ENCODE measurements at regions of chr5 and their contacts with region 1.

Region 1: DNA sequence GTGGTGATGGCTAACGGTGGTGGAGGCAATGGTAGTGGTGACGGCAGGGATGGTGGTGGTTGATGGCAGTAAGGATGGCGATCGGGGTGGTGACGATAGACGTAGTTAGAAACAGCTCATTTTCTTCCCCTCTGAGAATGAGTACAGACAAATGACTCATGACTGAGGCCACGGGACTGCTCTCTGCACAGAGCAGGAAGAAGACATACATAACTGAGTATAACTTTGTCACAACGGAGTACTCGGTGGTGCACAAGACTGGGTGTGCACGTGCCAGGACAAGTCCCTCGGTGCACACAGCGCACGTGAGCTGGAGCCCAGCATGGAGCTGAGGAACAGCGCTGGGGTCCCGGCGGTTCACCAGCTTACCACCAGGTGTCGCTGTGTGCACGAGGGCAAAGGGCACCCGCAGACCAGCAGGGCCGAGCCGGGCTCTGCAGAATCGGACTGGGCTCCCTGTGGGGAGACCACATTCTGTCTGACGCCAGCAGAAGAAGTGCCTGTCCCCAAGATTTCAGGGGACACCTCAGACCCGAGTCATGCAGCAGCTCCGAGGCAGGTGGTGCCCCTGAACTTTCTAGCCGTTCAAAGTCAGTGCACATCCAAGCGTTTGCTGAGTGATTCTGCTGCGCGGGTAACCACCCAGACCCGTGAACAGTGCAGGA is 188.6 kb downstream of the FSTL4 start:
- DNase-seq: peak; percentile 87
- H3K4me3 ChIP-seq: no peak overlapping the region
- H3K27ac ChIP-seq: no peak overlapping the region
- H3K4me1 ChIP-seq: no peaks in the 10 kb centered on the region; a peak in 1 of 4 replicates
- H3K27me3 ChIP-seq: no peaks in the 10 kb centered on the region; the same call in 1 of the 2 replicates
- CTCF ChIP-seq: peak; percentile 82
- EP300 ChIP-seq: no peak
- RAD21 ChIP-seq: peak; percentile 85

Region 2: DNA sequence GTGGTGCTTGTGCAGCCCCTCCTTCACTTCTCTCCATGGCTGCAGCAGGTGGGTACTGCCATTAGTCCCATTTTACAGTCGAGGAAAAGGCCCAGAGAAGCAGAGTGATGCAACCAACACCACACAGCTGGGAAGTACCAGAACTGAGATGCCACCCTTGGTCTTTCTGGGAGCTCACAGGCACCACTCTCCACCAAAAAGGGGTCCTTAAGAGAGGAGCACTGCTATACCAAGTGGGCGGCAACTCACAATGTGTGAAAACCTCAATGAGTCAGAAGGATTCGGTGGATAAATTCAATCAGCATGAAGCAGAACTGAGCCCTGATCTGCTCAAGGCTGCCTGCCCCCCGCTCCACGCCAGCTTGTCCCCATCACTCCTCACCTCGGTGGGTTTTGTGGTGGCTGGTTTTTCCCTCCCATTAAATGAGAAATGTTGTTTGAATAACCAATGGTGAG is 25.1 kb before region 1 on chr5:
- CTCF ChIA-PET with region 1: interaction called, 15 read pairs
- POLR2A ChIA-PET with region 1: no interaction called
- DNase-seq: no peak
- H3K4me3 ChIP-seq: no peak overlapping the region
- H3K27ac ChIP-seq: no peak overlapping the region
- H3K4me1 ChIP-seq: peaks cover 0 to 4% of the 10 kb centered on the region in 2 experiments; a peak in 1 of 4 replicates
- H3K27me3 ChIP-seq: no peaks in the 10 kb centered on the region
- CTCF ChIP-seq: no peak
- EP300 ChIP-seq: no peak
- RAD21 ChIP-seq: no peak

Region 3: DNA sequence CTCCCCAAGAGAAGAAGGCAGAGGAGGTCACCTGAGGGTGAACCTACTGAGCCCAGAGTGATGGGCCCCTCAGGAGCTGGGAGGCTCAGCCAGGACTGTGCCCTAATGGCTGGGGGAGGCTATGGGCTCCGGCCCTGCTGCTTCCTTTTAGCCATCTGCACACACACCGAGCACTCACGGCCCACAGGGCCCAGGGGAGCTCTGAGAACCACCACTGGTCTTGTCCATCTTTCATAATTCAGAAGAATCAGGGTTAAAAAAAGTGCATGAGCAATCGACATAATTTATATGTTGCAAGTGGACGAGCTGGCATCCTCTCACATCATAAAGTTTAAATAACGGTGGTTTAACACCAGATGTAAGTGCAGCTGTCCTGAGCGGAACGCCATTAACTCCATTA is 26.5 kb after region 1 on chr5:
- CTCF ChIA-PET with region 1: interaction called, 32 read pairs
- POLR2A ChIA-PET with region 1: no interaction called
- DNase-seq: no peak
- H3K4me3 ChIP-seq: no peak overlapping the region
- H3K27ac ChIP-seq: no peak overlapping the region
- H3K4me1 ChIP-seq: peaks cover 0 to 22% of the 10 kb centered on the region in 2 experiments; a peak in 2 of 4 replicates
- H3K27me3 ChIP-seq: no peaks in the 10 kb centered on the region
- CTCF ChIP-seq: no peak
- EP300 ChIP-seq: no peak
- RAD21 ChIP-seq: no peak

Region 4: DNA sequence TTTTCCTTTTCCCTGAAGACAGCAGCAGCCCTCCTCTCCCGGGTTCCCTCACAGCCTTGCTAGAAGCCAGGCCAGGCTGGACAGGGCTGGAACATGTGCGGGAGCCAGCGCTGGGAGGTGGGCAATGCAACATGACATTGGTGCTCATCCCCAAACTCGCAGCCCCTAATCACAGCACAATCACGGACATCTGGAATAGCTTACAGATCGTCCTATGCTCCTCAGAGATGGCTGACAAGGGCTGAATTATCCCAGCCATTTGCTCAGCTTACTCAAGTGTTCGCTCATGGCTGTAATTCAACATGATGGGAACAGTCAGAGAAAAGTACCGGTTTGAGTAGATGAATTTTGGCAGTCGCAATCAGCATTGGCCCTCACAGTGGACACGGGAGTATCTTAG is 138.8 kb after region 1 on chr5:
- CTCF ChIA-PET with region 1: interaction called, 20 read pairs
- POLR2A ChIA-PET with region 1: no interaction called
- DNase-seq: peak; percentile 65
- H3K4me3 ChIP-seq: no peak overlapping the region
- H3K27ac ChIP-seq: no peak overlapping the region
- H3K4me1 ChIP-seq: peaks cover 0 to 25% of the 10 kb centered on the region in 2 experiments; a peak in 1 of 4 replicates
- H3K27me3 ChIP-seq: no peaks in the 10 kb centered on the region; the same call in 1 of the 2 replicates
- CTCF ChIP-seq: no peak
- EP300 ChIP-seq: no peak
- RAD21 ChIP-seq: no peak

Region 5: GRCh38 chr5:133709209-133709725 is 285.5 kb after region 1 on chr5:
- CTCF ChIA-PET with region 1: interaction called, 37 read pairs
- POLR2A ChIA-PET with region 1: no interaction called
- DNase-seq: no peak
- H3K4me3 ChIP-seq: no peak overlapping the region
- H3K27ac ChIP-seq: peak overlapping the region in 1 of 2 experiments; percentile 93; a peak in 2 of 4 replicates
- H3K4me1 ChIP-seq: peaks cover 0 to 71% of the 10 kb centered on the region in 2 experiments; a peak in 2 of 4 replicates
- H3K27me3 ChIP-seq: no peaks in the 10 kb centered on the region
- CTCF ChIP-seq: no peak
- EP300 ChIP-seq: no peak
- RAD21 ChIP-seq: no peak

Region 6: GRCh38 chr5:133944263-133945185 is 520.8 kb after region 1 on chr5:
- CTCF ChIA-PET with region 1: interaction called, 67 read pairs
- POLR2A ChIA-PET with region 1: no interaction called
- DNase-seq: peak; percentile 81
- H3K4me3 ChIP-seq: peak overlapping the region in 1 of 2 experiments; percentile 40; a peak in 1 of 4 replicates
- H3K27ac ChIP-seq: no peak overlapping the region
- H3K4me1 ChIP-seq: no peaks in the 10 kb centered on the region
- H3K27me3 ChIP-seq: no peaks in the 10 kb centered on the region
- CTCF ChIP-seq: peak; percentile 77
- EP300 ChIP-seq: no peak
- RAD21 ChIP-seq: peak; percentile 96